ENCODE measurements at regions of chr13 and their contacts with region 1.

Region 1: DNA sequence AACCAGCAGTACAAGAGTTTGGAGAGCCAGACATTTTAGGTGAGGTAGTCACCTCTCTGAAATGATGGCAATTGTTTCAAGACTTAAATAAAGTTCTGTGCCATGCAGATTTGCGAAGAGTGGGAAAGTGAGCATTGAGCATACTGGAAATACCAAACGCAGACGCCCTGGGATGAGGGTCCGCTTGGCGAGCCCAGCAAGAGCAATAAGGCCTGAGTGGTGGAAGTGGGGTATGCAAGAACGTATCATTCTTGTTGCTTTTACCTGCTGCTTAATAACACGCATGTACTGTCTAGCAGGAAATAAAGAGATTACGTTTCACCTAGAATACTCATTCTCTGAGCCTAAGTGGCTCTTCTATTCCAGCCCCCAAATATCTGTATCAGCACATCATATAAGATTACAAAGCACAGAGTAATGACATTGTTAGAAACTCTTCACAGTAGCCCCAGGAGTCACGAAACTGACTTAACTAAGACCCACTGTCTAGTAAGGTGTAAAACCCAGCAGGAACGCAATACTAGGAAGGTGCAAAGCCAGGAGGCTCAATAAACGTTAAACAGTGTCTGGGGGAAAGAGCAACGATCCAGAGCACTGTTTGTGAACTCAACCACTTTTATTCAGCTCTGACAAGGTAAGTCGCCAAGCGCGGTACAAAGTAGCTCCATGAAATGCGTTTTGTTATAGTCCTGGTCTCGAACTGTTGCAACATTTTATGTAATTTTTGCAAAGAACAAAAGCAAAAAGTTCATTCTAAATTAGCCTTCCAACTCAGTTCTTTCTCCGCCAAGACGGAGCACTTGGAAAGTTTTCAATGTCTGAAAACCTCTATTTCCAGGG is 1.2 kb downstream of the RCBTB2 start:
- DNase-seq: no peak
- H3K4me3 ChIP-seq: peak overlapping the region; percentile 76 to 93 (median 80)
- H3K27ac ChIP-seq: peak overlapping the region; percentile 95 to 99 (median 97)
- H3K4me1 ChIP-seq: peaks cover 4 to 26% (median 19%) of the 10 kb centered on the region in 4 donors
- H3K27me3 ChIP-seq: no peaks in the 10 kb centered on the region
- CTCF ChIP-seq: no peak
- EP300 ChIP-seq: no peak
- POLR2A ChIP-seq: no peak

Region 2: GRCh38 chr13:48043789-48044503 is 487.7 kb before region 1 on chr13:
- intact Hi-C with region 1: no loop called
- DNase-seq: no peak
- H3K4me3 ChIP-seq: no peak overlapping the region
- H3K27ac ChIP-seq: no peak overlapping the region
- H3K4me1 ChIP-seq: peaks cover 0 to 1% (median 0%) of the 10 kb centered on the region in 4 donors
- H3K27me3 ChIP-seq: no peaks in the 10 kb centered on the region
- CTCF ChIP-seq: no peak
- EP300 ChIP-seq: no peak
- POLR2A ChIP-seq: no peak

Region 3: GRCh38 chr13:48567515-48568369 is 36.1 kb after region 1 on chr13:
- intact Hi-C with region 1: loop called (anchors 2 kb)
- DNase-seq: peak; percentile 90
- H3K4me3 ChIP-seq: peak overlapping the region in 3 of 4 donors; percentile 2 to 19 (median 13)
- H3K27ac ChIP-seq: peak overlapping the region; percentile 71 to 84 (median 78)
- H3K4me1 ChIP-seq: peaks cover 28 to 58% (median 56%) of the 10 kb centered on the region in 4 donors
- H3K27me3 ChIP-seq: no peaks in the 10 kb centered on the region
- CTCF ChIP-seq: no peak
- EP300 ChIP-seq: no peak
- POLR2A ChIP-seq: no peak